Activated naive CD8-positive, alpha-beta T cell treated with anti-CD3 and anti-CD28 coated beads, Interleukin-2, amount 10 ng/mL, durations not matched to agents 7 days and 5 days (primary cell): ENCODE measurements at regions of chr3 and their contacts with region 1.

Region 1: GRCh38 chr3:69200384-69201068 is 78.1 kb upstream of the LMOD3 start:
- DNase-seq: no peak
- ATAC-seq: peak; percentile 34
- H3K4me3 Mint-ChIP-seq: peak overlapping the region; percentile 86
- H3K27ac Mint-ChIP-seq: peak overlapping the region; percentile 90
- H3K4me1 Mint-ChIP-seq: peaks cover 59% of the 10 kb centered on the region
- H3K27me3 Mint-ChIP-seq: no peaks in the 10 kb centered on the region

Region 2: GRCh38 chr3:68535782-68536181 is 664.7 kb before region 1 on chr3:
- POLR2A ChIA-PET with region 1: no interaction called
- DNase-seq: no peak
- ATAC-seq: no peak
- H3K4me3 Mint-ChIP-seq: no peak overlapping the region
- H3K27ac Mint-ChIP-seq: no peak overlapping the region
- H3K4me1 Mint-ChIP-seq: no peaks in the 10 kb centered on the region
- H3K27me3 Mint-ChIP-seq: no peaks in the 10 kb centered on the region

Region 3: DNA sequence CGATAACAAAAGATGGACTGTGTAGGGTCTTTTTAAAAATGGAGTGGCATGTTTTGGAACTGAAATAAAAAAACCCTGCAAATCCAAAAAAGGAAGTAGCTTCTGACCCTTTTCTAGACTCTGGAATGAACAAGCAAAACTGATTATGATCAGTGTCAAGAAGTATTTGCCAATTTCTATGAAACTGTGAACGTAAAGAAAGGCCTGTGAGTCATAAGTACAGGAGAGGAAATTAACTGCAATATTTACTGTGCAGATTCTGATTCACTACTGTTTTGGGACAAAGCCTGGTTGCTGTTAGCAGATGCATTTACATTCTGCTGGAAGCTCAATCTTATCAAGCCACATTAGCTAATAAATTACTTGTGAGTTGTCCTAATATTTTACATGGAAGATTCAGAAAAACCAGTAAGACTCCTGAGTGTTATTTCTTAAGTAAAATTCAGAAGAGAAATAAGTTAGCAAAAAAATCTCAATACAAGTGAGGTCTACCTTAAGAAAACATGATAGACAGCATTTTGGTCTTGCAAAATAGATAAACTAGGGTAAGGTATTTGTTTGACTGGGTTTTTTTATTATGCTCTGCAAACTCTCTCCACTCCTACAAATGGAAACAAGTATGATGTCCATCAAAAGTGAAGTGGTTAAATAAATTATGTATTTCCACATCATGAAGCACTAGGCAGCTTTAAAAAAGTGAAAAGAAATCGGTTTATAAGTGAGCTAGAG is 12.0 kb after region 1 on chr3:
- POLR2A ChIA-PET with region 1: interaction called, 37 read pairs
- DNase-seq: no peak
- ATAC-seq: peak; percentile 94
- H3K4me3 Mint-ChIP-seq: peak overlapping the region; percentile 46
- H3K27ac Mint-ChIP-seq: peak overlapping the region; percentile 80
- H3K4me1 Mint-ChIP-seq: peaks cover 32% of the 10 kb centered on the region
- H3K27me3 Mint-ChIP-seq: no peaks in the 10 kb centered on the region

Region 4: DNA sequence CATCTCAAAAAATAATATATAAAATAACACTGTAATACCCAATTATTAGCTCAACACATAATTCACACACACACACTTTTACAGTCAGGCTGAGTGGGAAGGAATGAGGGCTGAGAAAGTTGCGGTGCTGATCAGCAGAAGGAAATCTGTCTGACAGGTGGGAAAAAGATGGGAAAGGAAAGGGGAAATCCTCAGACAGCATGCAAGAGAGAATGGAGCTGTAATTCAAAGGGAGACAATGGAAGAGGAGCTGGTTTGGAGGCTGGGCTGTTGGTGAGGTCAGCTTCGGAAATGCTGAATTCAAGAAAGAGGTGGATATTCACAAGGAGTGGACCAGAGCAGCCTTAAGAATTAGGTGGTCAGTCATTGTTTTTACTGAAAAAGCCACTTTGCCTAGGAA is 43.5 kb after region 1 on chr3:
- POLR2A ChIA-PET with region 1: no interaction called
- DNase-seq: no peak
- ATAC-seq: no peak
- H3K4me3 Mint-ChIP-seq: no peak overlapping the region
- H3K27ac Mint-ChIP-seq: no peak overlapping the region
- H3K4me1 Mint-ChIP-seq: no peaks in the 10 kb centered on the region
- H3K27me3 Mint-ChIP-seq: no peaks in the 10 kb centered on the region